Esophagus squamous epithelium (tissue), 5 donors: ENCODE measurements at regions of chr9 and their contacts with region 1.

Region 1: DNA sequence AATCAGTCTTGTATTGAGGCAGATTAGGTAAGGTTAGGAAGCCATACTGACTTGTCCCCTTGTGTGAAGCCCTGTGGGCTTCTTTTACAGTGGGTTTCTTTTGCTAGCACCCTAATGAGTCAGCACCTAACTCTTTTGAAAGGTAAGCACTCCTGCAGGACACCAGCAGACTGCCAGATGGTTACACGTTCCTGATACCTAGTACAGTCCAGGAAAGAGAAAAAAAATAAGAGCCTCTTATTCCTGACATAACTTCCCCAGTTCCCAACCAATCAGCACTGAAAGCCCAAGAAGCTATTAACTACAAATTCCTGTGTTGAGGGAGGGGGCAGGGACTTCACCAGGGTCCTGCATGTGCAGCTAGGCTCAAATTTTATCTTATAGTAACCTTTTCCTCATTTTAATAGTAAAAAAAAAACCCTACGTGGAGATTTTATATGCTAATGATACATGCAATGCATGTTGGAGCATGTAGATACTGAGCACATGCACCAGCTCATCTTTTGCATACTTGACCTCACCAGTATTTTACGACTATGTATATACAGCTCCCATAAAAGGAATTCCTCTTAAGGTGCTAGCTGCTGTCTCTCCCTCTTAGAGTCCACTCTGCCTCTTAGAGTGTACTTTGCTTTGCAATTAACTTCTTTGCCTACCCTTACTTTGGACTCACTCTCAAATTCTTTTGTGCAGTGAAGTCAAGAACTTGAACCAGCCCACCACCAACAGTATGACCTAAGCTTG is 84.7 kb upstream of the RORB start:
- DNase-seq: no peak
- H3K4me3 ChIP-seq: no peak overlapping the region
- H3K27ac ChIP-seq: no peak overlapping the region
- H3K4me1 ChIP-seq: peaks cover 0 to 11% (median 0%) of the 10 kb centered on the region in 3 donors
- H3K27me3 ChIP-seq: no peaks in the 10 kb centered on the region
- CTCF ChIP-seq: no peak
- POLR2A ChIP-seq: no peak

Region 2: DNA sequence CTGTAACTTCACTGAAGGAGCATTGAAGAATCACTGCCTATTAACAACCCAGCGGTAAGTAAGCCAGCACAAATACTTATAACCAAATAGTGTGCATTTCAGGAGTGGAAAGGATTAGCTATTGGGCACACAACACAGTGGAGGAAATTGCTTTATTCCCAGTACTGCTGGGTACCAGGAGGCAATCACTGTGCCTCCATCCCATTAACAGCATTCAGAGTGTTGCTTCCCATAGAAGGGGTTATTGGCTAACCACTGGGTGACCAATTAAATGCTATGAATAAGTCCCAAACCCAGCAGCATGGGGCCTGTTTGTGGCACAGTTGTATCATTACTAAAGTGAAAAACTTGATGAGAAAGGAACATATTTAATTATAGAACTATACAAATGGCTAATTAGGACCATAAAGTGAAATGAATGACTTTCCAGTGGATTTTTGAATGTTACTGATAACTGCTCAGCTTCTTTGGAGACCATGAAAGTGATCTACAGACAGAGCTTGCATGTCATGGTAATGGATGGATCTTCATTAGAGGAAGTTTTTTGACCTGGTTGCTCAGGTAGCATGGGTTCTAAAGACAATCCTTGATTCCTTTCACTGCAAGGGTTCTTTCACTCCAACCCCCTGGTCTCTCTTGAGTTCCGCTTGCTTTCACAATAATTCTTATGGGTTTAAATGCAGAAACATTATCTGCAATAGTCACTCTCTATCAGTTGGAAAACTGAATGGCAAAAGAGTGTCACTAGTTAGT is 328.6 kb before region 1 on chr9:
- intact Hi-C with region 1: no loop called
- DNase-seq: no peak
- H3K4me3 ChIP-seq: no peak overlapping the region
- H3K27ac ChIP-seq: no peak overlapping the region
- H3K4me1 ChIP-seq: no peaks in the 10 kb centered on the region
- H3K27me3 ChIP-seq: no peaks in the 10 kb centered on the region
- CTCF ChIP-seq: no peak
- POLR2A ChIP-seq: no peak

Region 3: DNA sequence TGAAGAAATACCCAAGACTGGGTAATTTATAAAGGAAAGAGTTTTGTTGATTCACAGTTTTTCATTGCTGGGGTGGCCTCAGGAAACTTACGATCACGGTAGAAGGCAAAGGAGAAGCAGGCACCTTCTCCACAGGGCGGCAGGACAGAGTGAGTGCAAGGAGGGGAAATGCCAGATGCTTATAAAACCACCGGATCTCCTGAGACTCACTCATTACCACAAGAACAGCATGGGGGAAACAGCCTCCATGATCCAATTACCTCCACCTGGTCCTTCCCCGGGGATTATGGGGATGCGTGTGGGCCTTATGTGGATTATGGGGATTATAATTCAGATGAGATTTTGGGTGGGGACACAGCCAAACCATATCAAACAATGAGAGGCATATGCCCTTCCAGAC is 66.2 kb after region 1 on chr9:
- intact Hi-C with region 1: loop called (anchors 10 kb)
- DNase-seq: no peak
- H3K4me3 ChIP-seq: no peak overlapping the region
- H3K27ac ChIP-seq: no peak overlapping the region
- H3K4me1 ChIP-seq: no peaks in the 10 kb centered on the region
- H3K27me3 ChIP-seq: no peaks in the 10 kb centered on the region
- CTCF ChIP-seq: no peak
- POLR2A ChIP-seq: no peak

Region 4: GRCh38 chr9:74735761-74736160 is 323.4 kb after region 1 on chr9:
- intact Hi-C with region 1: no loop called
- DNase-seq: no peak
- H3K4me3 ChIP-seq: no peak overlapping the region
- H3K27ac ChIP-seq: no peak overlapping the region
- H3K4me1 ChIP-seq: no peaks in the 10 kb centered on the region
- H3K27me3 ChIP-seq: peaks cover 0 to 4% (median 0%) of the 10 kb centered on the region in 4 donors
- CTCF ChIP-seq: no peak
- POLR2A ChIP-seq: no peak